ENCODE measurements at regions of chr4 and their contacts with region 1.

Region 1: DNA sequence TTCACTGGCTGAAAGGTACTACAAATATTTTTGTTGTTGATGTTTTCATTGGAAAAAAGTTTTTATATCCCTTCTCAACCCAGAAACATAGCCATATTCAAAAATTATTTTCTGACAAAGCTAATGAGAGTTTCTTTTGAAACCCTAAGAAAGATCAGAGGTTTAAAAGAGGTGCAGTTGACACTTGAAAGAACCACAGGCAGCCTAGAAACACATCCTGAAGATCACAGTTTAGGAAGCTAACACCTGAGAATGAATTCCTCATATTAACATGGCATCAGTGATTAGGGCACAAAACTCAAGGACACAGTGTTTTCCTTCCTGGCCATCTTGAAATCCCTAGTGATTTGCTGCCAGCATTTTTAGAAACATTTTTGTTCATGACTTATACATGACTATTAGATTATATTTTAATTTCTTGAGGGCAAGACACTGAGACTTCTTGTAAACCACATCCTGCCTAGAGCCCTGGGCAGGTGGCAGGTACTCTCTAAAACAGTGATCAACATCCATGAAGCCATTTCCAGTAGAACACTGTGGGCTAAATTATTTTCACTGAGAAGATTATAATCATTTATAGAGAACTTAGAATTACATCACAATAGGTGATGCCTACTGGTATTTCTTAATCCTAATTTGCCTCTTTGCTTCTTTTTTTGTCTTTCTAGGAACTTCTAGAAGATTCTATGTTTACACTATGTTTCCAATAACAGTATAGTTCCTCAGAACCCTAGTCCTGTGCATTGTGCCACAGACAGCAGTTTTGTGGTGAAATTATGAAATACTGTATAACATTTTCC is 80.0 kb downstream of the ARSJ start:
- DNase-seq: no peak
- H3K4me3 ChIP-seq: no peak overlapping the region
- H3K27ac ChIP-seq: no peak overlapping the region
- H3K4me1 ChIP-seq: no peaks in the 10 kb centered on the region
- H3K27me3 ChIP-seq: no peaks in the 10 kb centered on the region
- CTCF ChIP-seq: no peak

Region 2: GRCh38 chr4:112853662-112854256 is 1045.7 kb before region 1 on chr4:
- intact Hi-C with region 1: no loop called
- DNase-seq: no peak
- H3K4me3 ChIP-seq: no peak overlapping the region
- H3K27ac ChIP-seq: no peak overlapping the region
- H3K4me1 ChIP-seq: peaks cover 41% of the 10 kb centered on the region
- H3K27me3 ChIP-seq: no peaks in the 10 kb centered on the region
- CTCF ChIP-seq: peak; percentile 49

Region 3: DNA sequence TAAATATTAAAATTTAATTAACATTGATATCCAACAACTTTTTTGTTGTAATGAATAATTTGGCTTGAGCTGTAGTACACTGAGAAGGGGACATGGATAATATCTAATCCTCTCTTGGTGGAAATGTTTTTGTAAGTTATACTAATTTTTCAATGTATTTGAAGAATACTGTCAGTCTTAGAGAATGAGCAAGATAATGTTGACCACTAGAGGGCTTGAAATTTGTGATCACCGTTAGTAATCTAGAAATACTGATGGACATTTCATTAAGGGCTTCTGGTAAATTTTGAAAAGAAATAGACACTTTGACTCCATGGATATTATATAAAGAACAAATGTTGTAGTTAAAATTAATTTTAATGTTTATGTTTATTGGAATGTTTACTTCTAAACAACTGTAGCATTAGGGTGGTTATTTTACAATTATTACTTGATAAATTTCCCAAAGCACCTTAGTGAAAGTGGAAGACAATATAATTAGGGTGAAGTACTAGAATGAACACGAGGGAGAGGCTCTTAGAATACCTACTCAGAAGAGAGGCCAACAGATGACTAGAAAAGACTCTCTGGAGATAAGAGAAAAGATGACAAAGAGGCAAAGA is 117.9 kb before region 1 on chr4:
- intact Hi-C with region 1: loop called (anchors 10 kb)
- DNase-seq: no peak
- H3K4me3 ChIP-seq: no peak overlapping the region
- H3K27ac ChIP-seq: no peak overlapping the region
- H3K4me1 ChIP-seq: no peaks in the 10 kb centered on the region
- H3K27me3 ChIP-seq: no peaks in the 10 kb centered on the region
- CTCF ChIP-seq: peak; percentile 78

Region 4: DNA sequence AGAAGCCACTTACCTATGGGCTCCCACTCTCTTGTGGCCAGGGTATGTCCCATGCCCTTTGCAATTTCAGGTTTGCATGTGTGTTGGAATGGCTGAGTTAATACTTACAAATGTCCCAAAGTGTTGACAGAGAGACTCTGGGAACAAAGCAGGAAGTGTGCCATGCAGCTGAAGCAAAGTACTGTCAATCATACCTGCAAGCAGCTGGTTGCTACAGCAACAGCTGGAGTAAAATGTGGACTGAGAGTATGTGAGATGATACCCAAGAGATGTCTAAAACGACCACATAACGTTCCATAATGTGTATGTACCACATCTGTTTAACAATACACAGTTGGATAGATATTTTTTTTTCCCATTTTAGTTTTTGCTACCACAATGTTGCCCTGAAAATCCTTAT is 55.1 kb before region 1 on chr4:
- intact Hi-C with region 1: no loop called
- DNase-seq: no peak
- H3K4me3 ChIP-seq: no peak overlapping the region
- H3K27ac ChIP-seq: no peak overlapping the region
- H3K4me1 ChIP-seq: peaks cover 1% of the 10 kb centered on the region
- H3K27me3 ChIP-seq: no peaks in the 10 kb centered on the region
- CTCF ChIP-seq: no peak

Region 5: GRCh38 chr4:113952452-113953029 is 53.1 kb after region 1 on chr4:
- intact Hi-C with region 1: no loop called
- DNase-seq: no peak
- H3K4me3 ChIP-seq: no peak overlapping the region
- H3K27ac ChIP-seq: no peak overlapping the region
- H3K4me1 ChIP-seq: peaks cover 14% of the 10 kb centered on the region
- H3K27me3 ChIP-seq: peaks cover 40% of the 10 kb centered on the region
- CTCF ChIP-seq: peak; percentile 69